ENCODE measurements at regions of chr3 and their contacts with region 1.

Region 1: GRCh38 chr3:72265256-72266015 is 480.5 kb upstream of the PROK2 start:
- DNase-seq: no peak
- ATAC-seq: peak; percentile 57
- H3K4me3 ChIP-seq: no peak overlapping the region
- H3K27ac ChIP-seq: no peak overlapping the region
- H3K4me1 ChIP-seq: peaks cover 43% of the 10 kb centered on the region
- H3K27me3 ChIP-seq: no peaks in the 10 kb centered on the region
- CTCF ChIP-seq: peak; percentile 3 to 35 (median 23); a peak in 2 of 6 replicates
- EP300 ChIP-seq: no peak
- POLR2A ChIP-seq: no peak
- RAD21 ChIP-seq: peak; percentile 62

Region 2: GRCh38 chr3:71846185-71846584 is 419.3 kb before region 1 on chr3:
- CTCF ChIA-PET with region 1: no interaction called
- POLR2A ChIA-PET with region 1: no interaction called
- RAD21 ChIA-PET with region 1: no interaction called
- SMC1A ChIA-PET with region 1: no interaction called
- in situ Hi-C with region 1: no loop called
- intact Hi-C with region 1: no loop called
- DNase-seq: no peak
- ATAC-seq: no peak
- H3K4me3 ChIP-seq: no peak overlapping the region
- H3K27ac ChIP-seq: no peak overlapping the region
- H3K4me1 ChIP-seq: no peaks in the 10 kb centered on the region
- H3K27me3 ChIP-seq: peaks cover 0 to 1% of the 10 kb centered on the region in 2 experiments; a peak in 2 of 4 replicates
- CTCF ChIP-seq: no peak
- EP300 ChIP-seq: no peak
- POLR2A ChIP-seq: no peak
- RAD21 ChIP-seq: no peak

Region 3: GRCh38 chr3:71926262-71926600 is 339.2 kb before region 1 on chr3:
- CTCF ChIA-PET with region 1: interaction called, 11 read pairs
- POLR2A ChIA-PET with region 1: no interaction called
- RAD21 ChIA-PET with region 1: interaction called, 4 read pairs
- SMC1A ChIA-PET with region 1: interaction called, 7 read pairs
- in situ Hi-C with region 1: no loop called
- intact Hi-C with region 1: no loop called
- DNase-seq: no peak
- ATAC-seq: peak; percentile 71
- H3K4me3 ChIP-seq: no peak overlapping the region
- H3K27ac ChIP-seq: no peak overlapping the region
- H3K4me1 ChIP-seq: peaks cover 4% of the 10 kb centered on the region; the same call in 1 of the 2 replicates
- H3K27me3 ChIP-seq: no peaks in the 10 kb centered on the region
- CTCF ChIP-seq: peak; percentile 36 to 53 (median 51); a peak in 5 of 6 replicates
- EP300 ChIP-seq: no peak
- POLR2A ChIP-seq: no peak
- RAD21 ChIP-seq: peak; percentile 72

Measured in GM12878 (cell line).